Activated T-helper 2 cell treated with anti-CD3 and anti-CD28 coated beads, Interferon-gamma antibody, Interleukin-2, Interleukin-4, amounts not matched to agents 10 μg/mL and 5 μg/mL and 100 μg/mL, durations not matched to agents 14 hours and 24 hours and 36 hours (primary cell): ENCODE measurements at regions of chr10 and their contacts with region 1.

Region 1: GRCh38 chr10:95693668-95694534 is at the start of gene TCTN3:
- DNase-seq: peak; percentile 97
- H3K4me3 Mint-ChIP-seq: peak within 1 kb of the TSS; percentile 99
- H3K27ac Mint-ChIP-seq: peak within 1 kb of the TSS; percentile 97
- H3K4me1 Mint-ChIP-seq: peaks cover 39% of the 10 kb centered on the region
- H3K27me3 Mint-ChIP-seq: no peaks in the 10 kb centered on the region
- total RNA-seq, gene TCTN3: 66.5 and 71.3 TPM in 2 replicates

Region 2: GRCh38 chr10:95561182-95562075 is 132.5 kb before region 1 on chr10 and contains the start of gene SORBS1:
- intact Hi-C with region 1: loop called (anchors 1 kb)
- DNase-seq: peak; percentile 88
- H3K4me3 Mint-ChIP-seq: peak within 1 kb of the TSS; percentile 97
- H3K27ac Mint-ChIP-seq: peak within 1 kb of the TSS; percentile 78
- H3K4me1 Mint-ChIP-seq: peaks cover 14% of the 10 kb centered on the region
- H3K27me3 Mint-ChIP-seq: peaks cover 58% of the 10 kb centered on the region
- total RNA-seq, gene SORBS1: 0.43 and 1.3 TPM in 2 replicates

Region 3: DNA sequence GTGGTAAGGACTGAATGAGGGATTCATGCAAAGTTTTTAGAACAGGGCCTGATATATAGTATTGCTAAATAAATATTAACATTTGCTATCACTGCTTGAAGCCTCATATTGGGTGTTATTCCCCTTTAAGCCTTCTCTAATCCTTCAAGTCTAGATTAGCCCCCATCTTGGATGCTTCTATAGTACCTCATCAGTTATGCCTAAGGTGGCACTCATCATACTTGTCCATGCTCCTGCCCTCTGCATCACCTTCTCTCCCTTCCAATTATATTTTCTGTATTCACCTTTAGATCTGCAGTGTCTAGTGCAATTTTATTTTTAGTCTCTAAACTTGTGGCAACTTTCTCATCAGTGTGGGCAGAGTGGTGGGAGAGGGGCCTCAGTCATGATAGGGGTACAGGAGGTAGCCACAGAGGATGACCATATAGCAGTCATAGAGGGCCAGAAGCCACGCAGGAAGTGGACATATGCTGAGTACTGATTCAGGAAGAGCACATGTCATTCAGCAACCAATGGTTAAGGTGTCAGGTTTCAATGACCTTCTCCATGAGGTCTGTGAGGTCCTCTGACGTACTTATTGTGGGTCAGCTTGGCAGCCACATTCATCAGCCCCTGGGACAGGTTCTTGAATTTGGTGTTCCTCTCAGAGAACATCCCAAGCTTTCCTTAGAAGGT is 64.6 kb after region 1 on chr10:
- intact Hi-C with region 1: loop called (anchors 1 kb)
- DNase-seq: no peak
- H3K4me3 Mint-ChIP-seq: peak overlapping the region; percentile 54
- H3K27ac Mint-ChIP-seq: peak overlapping the region; percentile 82
- H3K4me1 Mint-ChIP-seq: peaks cover 49% of the 10 kb centered on the region
- H3K27me3 Mint-ChIP-seq: peaks cover 12% of the 10 kb centered on the region

Region 4: GRCh38 chr10:95864906-95865813 is 171.3 kb after region 1 on chr10:
- intact Hi-C with region 1: loop called (anchors 1 kb)
- DNase-seq: peak; percentile 59
- H3K4me3 Mint-ChIP-seq: peak overlapping the region; percentile 5
- H3K27ac Mint-ChIP-seq: peak overlapping the region; percentile 82
- H3K4me1 Mint-ChIP-seq: peaks cover 56% of the 10 kb centered on the region
- H3K27me3 Mint-ChIP-seq: no peaks in the 10 kb centered on the region

Region 5: GRCh38 chr10:95963226-95963990 is 269.5 kb after region 1 on chr10:
- intact Hi-C with region 1: loop called (anchors 10 kb)
- DNase-seq: peak; percentile 15
- H3K4me3 Mint-ChIP-seq: peak overlapping the region; percentile 75
- H3K27ac Mint-ChIP-seq: peak overlapping the region; percentile 99
- H3K4me1 Mint-ChIP-seq: peaks cover 32% of the 10 kb centered on the region
- H3K27me3 Mint-ChIP-seq: no peaks in the 10 kb centered on the region

Region 6: DNA sequence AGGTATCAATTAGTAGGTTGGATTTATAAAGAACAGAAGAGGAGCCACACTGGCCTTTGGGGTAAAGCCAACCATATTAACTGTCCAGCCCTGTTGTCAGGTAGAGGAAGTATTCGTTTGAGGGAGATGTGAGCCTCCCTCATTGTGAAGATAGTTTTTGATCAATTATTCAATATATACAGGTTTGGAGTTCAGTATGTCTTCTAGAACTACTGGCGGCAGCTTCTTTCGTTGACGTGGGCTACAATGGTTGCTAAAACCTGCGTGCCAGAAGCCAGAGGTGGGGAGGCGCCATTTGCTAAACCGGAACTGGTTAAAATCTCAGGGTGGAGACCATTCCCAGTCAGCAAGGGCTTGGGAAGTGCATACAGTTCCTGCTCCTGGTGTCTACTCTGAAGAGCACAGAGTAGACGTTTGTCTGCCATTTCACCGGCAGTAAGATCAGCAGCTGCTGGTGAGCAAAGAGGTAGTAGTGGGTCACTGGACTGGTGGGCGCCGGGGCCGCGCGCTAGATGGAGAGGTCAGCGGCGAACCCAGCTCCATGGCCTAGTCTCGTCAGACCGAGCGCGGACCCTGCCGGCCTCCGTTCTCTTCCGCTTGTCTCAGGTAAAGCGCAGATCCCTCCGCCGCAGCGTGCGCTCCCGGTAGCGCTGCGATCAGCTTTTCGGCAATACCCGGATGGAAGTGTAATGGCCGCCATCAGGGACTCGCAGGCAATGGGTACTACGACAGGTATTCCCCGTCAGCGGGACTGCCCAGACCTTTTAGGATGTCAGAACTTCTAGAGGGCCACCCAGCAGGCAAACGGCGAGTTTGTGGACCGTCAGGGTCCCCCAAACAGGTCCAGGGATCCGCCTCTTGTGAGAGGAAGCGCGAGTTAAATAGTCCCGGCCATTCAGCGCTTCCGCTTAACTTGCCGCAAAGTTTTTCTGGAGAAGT is 435.8 kb after region 1 on chr10 and contains the start of gene ZNF518A:
- intact Hi-C with region 1: loop called (anchors 2 kb)
- DNase-seq: peak; percentile 90
- H3K4me3 Mint-ChIP-seq: peak within 1 kb of the TSS; percentile 94
- H3K27ac Mint-ChIP-seq: peak within 1 kb of the TSS; percentile 100
- H3K4me1 Mint-ChIP-seq: peaks cover 26% of the 10 kb centered on the region
- H3K27me3 Mint-ChIP-seq: peaks cover 20% of the 10 kb centered on the region
- total RNA-seq, gene ZNF518A: 16.0 and 18.0 TPM in 2 replicates